ENCODE measurements at regions of chr2 and their contacts with region 1.

Region 1: DNA sequence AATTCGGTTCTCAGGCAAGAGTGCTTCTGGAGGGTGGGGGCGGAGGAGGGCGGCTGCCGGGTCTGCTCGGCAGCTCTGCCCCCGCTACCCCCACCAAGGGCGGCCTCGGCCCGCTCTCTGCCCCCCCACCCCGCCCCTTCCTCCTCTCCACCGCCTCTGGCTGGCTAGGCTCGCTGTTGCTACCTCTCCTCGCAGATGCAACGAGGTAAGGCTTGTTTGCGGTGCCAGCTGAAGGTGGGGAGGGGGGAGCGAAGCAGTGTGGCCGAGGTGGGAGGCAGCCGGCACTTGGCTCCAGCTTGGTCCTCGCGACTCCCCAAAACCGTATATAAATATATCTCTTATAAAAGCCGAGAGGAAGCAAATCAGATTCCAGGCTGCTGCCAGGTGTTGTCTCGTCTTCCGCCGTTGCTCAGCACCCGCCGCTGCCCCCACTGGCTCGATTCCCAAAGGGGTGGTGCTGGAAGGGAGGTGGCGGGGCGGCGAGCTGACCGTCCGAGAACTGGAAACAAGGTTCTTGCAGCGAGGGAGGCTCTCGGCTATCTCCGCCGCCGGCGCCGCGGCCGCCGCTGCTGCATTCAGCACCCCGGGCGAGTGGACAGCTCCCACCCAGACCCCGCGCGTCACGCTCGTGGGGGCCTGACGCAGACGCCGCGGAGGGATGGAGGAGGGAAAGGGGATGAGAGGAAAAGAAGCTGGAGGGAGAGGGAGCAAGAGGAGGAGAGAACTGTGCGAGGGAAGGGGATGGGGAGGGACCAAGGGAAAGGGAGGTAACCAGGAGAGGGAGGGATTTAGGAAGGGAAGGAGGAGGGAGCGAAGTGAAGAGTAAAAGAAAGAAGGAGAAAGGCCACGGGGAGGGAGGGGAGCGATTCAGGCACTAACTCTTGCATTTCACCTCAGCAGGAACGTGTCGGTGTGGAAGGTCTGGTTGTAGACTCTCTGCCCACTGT is at the start of gene MARCHF4:
- DNase-seq: peak; percentile 64 to 85
- H3K4me3 ChIP-seq: peak within 1 kb of the TSS; percentile 72
- H3K27ac ChIP-seq: peak within 1 kb of the TSS; percentile 90
- H3K4me1 ChIP-seq: peaks cover 39% of the 10 kb centered on the region
- H3K27me3 ChIP-seq: no peaks in the 10 kb centered on the region
- CTCF ChIP-seq: no peak
- total RNA-seq, gene MARCHF4: 7.7 and 14.5 TPM in 2 replicates

Region 2: GRCh38 chr2:215188078-215188477 is 1184.0 kb before region 1 on chr2:
- CTCF ChIA-PET with region 1: no interaction called
- POLR2A ChIA-PET with region 1: no interaction called
- intact Hi-C with region 1: no loop called
- DNase-seq: no peak
- H3K4me3 ChIP-seq: no peak overlapping the region
- H3K27ac ChIP-seq: no peak overlapping the region
- H3K4me1 ChIP-seq: no peaks in the 10 kb centered on the region
- H3K27me3 ChIP-seq: no peaks in the 10 kb centered on the region
- CTCF ChIP-seq: no peak

Region 3: DNA sequence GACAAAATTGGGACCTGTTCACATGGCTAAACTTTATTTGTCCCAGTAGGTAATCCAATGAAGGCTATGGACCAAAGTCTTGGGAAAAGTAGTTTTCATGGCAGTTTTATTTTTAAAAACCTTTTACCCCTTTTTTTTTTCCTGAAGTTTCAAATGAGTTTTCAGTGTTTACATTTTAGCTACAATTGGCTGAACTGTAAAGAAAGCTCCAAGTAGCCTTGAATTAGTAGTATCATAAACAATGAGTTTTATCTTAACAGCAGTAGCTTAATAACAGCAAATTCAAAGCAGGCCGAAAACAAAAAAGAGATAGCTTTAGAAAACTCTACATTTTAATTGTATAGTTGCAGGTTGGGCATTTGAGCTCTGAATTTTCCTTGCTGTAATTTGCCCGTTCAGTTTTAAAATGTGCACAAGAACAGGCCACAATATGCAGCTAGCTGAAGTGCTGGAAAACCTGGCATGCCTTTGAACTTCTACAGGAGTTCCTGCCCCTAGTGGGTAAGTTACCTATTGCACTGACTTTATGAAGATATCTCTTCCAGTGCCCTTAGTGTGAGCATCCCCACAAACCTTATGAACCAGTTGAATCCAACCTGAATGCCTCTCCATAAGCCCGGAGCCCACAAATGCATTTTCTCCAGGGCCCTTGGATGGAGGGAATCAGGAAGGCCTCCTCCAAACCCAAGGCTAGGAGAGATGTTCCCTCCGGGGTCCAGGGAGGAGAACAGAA is 156.2 kb before region 1 on chr2:
- CTCF ChIA-PET with region 1: interaction called, 3 read pairs
- POLR2A ChIA-PET with region 1: no interaction called
- intact Hi-C with region 1: loop called (anchors 2 kb)
- DNase-seq: no peak
- H3K4me3 ChIP-seq: no peak overlapping the region
- H3K27ac ChIP-seq: peak overlapping the region; percentile 38; the same call in 1 of the 2 replicates
- H3K4me1 ChIP-seq: peaks cover 57% of the 10 kb centered on the region
- H3K27me3 ChIP-seq: no peaks in the 10 kb centered on the region
- CTCF ChIP-seq: peak; percentile 41

Region 4: DNA sequence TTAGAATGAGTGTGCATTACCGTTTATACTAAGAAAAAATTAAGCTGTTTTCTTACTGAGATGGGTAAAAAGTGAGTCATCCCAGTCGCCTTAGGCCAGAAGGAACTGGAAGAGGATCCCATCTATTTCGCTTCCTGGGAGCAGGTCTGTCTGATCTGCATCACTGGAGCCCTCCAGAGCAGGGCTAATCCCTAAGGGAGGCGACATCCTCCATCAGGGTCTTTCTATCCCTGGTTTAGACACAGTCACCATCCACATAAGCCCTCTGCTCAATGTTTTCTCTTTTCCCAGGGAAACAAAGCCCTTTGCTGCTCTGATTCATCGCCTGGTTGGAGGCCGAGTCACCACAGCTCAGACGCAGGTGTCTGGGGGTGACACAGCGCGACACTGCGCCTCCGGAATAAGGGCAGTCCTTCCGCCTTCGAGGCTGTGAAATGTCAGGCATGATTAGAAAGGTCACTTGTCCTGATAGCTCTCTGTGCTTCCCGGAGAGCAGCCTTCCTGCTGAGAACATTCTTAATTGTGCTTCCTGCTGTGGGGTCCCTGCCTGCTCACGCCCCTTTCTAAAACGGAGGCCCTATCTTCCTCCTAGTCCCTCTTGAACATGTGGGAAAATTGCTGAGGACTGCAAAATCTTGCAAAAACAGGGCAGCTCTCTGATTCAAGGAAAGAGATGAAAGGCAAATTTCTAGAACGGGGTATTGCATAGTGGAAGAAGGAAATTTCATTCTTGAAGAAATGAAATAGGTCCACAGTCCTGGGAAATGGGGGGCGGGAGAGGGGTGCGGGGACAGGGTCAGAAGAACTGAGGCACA is 56.0 kb before region 1 on chr2:
- CTCF ChIA-PET with region 1: no interaction called
- POLR2A ChIA-PET with region 1: interaction called, 6 read pairs
- intact Hi-C with region 1: loop called (anchors 5 kb)
- DNase-seq: peak; percentile 77 to 89
- H3K4me3 ChIP-seq: peak overlapping the region; percentile 50; the same call in 1 of the 2 replicates
- H3K27ac ChIP-seq: peak overlapping the region; percentile 90
- H3K4me1 ChIP-seq: peaks cover 32% of the 10 kb centered on the region
- H3K27me3 ChIP-seq: no peaks in the 10 kb centered on the region
- CTCF ChIP-seq: no peak

Region 5: DNA sequence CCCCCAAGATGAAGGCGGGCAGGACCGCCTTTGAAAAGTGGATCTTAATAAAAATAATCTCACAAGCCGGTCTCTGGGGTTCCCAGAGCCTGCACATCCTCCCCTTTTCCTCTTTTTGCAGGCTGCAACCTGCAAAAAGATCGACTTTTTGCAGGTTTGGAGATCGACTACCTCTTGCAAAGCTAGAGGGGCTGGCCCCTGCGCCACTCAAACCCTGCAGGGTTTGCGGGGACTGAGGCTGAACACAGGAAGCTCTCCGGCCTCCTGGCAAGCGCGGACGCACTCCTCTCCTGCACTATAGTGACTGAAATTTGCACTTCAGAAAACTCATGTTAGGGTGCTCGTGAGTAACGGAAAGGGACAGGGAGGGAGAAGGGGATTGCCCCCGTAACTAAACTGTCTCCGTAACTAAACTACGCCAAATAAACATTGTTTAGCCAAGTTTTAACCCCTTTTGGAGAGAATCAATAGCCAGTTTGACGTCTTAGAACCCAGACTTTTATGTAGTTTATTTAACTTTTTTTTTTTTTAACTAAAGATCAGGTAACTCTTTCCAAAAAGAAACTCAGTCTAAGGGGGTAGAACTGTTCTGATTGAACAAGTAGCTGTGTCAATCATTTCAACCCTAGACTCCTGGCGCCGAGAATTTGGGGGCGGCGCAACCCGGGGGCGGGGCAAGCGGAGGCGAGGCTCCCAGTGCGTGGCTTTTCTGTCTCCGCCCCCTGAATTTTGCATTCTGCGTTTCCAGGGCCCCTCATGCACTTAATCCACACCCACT is 320.8 kb after region 1 on chr2:
- CTCF ChIA-PET with region 1: no interaction called
- POLR2A ChIA-PET with region 1: no interaction called
- intact Hi-C with region 1: no loop called
- DNase-seq: peak in 1 of 2 experiments; percentile 77
- H3K4me3 ChIP-seq: peak overlapping the region; percentile 49; the same call in 1 of the 2 replicates
- H3K27ac ChIP-seq: no peak overlapping the region
- H3K4me1 ChIP-seq: peaks cover 3% of the 10 kb centered on the region; the same call in 1 of the 2 replicates
- H3K27me3 ChIP-seq: no peaks in the 10 kb centered on the region
- CTCF ChIP-seq: no peak

Region 6: DNA sequence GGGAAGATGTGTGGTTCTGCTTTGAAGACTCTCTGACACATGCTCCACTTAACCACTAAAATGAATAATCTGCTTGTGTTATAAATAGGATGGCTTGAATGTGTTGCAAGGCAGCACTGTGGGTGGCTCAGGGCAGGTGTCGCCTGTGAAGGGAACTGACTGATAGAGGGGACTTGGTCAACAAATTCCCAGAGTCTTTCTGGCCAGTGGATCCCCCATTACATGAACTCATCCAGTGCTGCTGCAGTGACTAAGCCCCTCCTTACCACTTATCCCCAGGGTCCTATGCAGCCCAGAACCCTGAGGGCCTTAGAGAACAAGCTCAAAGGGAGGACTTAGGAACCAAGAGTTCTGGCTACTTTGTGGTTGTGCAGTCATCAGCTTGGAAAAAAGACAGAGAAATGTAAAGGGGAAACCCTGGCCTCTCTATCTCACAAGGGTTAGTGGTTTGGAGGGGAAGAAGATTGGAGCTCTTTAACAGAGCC is 714.1 kb after region 1 on chr2:
- CTCF ChIA-PET with region 1: no interaction called
- POLR2A ChIA-PET with region 1: no interaction called
- intact Hi-C with region 1: no loop called
- DNase-seq: no peak
- H3K4me3 ChIP-seq: no peak overlapping the region
- H3K27ac ChIP-seq: no peak overlapping the region
- H3K4me1 ChIP-seq: 0 out of 2 replicates have a peak, but pooled peaks cover 6% of the 10 kb centered on the region
- H3K27me3 ChIP-seq: no peaks in the 10 kb centered on the region
- CTCF ChIP-seq: no peak

Measured in PC-9 (cell line).